Endothelial cell of umbilical vein (primary cell): ENCODE measurements at regions of chr9 and their contacts with region 1.

Region 1: DNA sequence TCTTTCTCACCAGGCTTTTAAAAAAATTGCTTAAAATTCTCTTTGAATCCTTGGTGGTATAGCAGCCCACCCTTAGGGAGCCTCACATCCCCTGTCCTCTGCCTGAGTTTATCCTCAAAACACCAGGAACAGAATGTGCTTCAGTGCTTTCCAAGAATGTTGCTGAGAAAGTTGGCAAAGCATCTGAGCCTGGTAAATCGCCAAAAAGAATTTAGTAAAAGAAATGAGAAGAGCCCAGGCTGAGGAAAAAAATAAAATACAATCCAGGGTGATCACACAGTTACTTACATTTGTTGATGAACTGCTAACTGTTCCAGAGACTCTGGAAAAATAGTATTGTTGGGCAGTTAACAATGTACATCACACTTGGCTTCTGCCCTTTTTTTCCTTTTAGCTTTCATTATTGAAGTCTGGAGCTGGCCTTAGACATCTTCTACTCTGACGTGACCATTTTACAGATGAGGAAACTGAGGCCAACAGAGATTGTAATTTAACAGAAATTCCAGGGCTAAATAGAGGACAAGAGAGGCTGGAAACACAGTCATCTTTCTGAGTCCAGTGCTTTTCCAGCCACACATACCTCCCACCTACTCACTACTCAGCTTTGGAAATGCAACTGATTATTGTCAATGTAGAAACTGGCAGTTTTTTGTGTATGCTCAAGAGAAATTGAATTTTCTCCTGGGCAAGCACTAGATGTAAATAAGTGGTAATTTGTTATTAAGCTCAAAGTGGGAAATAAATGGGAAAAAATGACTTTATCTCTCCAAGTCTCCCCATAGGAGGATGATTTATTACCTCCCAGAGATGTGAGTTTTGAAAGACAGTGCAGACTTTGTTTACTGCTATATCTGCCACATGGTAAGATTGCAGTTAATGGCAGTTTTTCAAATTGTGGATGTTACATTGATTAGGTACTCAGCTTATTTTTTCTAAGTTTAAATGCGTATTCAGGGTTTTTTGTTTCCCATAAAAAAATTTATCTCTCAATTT is 86.7 kb upstream of the ALDH1A1 start:
- DNase-seq: peak; percentile 43
- H3K4me3 ChIP-seq: no peak overlapping the region
- H3K27ac ChIP-seq: no peak overlapping the region
- H3K4me1 ChIP-seq: no peaks in the 10 kb centered on the region
- H3K27me3 ChIP-seq: no peaks in the 10 kb centered on the region
- CTCF ChIP-seq: no peak
- POLR2A ChIP-seq: no peak

Region 2: DNA sequence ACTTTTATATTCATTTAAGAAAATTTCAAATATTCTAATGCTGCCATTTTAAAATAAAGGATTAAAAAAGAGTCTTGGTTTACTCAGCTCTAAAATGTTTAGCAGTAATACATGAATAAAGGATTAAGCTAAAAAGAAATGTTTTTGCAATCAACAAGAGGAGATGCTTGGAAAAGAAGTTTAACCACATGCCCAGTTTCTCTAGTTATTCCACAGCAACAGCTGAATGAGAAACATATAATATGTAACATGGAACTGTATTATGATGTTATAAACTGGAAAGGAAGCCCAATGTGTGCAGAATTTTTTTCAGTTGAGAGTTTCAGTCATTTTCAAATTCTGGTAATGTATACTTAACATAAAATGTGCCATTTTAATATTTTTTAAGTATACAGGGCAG is 10.2 kb before region 1 on chr9:
- CTCF ChIA-PET with region 1: no interaction called
- POLR2A ChIA-PET with region 1: no interaction called
- dilution Hi-C with region 1: no loop called
- intact Hi-C with region 1: loop called (anchors 2 kb)
- DNase-seq: no peak
- H3K4me3 ChIP-seq: no peak overlapping the region
- H3K27ac ChIP-seq: no peak overlapping the region
- H3K4me1 ChIP-seq: no peaks in the 10 kb centered on the region
- H3K27me3 ChIP-seq: no peaks in the 10 kb centered on the region
- CTCF ChIP-seq: no peak
- POLR2A ChIP-seq: no peak

Region 3: GRCh38 chr9:73050065-73050816 is 10.7 kb after region 1 on chr9:
- CTCF ChIA-PET with region 1: interaction called, 3 read pairs
- POLR2A ChIA-PET with region 1: interaction called, 7 read pairs
- dilution Hi-C with region 1: no loop called
- intact Hi-C with region 1: loop called (anchors 2 kb)
- DNase-seq: no peak
- H3K4me3 ChIP-seq: no peak overlapping the region
- H3K27ac ChIP-seq: no peak overlapping the region
- H3K4me1 ChIP-seq: no peaks in the 10 kb centered on the region
- H3K27me3 ChIP-seq: no peaks in the 10 kb centered on the region
- CTCF ChIP-seq: no peak
- POLR2A ChIP-seq: no peak

Region 4: DNA sequence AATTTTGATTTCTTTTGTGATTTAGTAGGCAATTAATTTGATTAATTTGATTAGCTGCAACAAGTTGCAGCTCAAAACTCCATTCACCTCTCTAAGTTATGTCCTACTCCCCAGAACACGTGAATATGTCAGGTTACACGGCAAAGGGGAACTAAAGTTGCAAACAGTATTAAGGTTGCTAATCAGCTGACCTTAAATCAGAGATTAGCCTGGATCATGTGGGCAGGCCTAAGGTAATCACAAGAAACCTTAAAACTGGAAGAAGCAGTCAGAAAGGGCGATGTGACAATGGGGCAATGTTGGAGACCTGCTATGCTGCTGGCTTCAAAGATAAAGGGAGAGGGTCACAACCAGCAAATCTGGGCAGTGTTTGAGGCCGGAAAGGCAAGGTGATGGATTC is 64.8 kb after region 1 on chr9:
- CTCF ChIA-PET with region 1: no interaction called
- POLR2A ChIA-PET with region 1: no interaction called
- dilution Hi-C with region 1: no loop called
- intact Hi-C with region 1: no loop called
- DNase-seq: no peak
- H3K4me3 ChIP-seq: no peak overlapping the region
- H3K27ac ChIP-seq: no peak overlapping the region
- H3K4me1 ChIP-seq: no peaks in the 10 kb centered on the region
- H3K27me3 ChIP-seq: no peaks in the 10 kb centered on the region
- CTCF ChIP-seq: no peak
- POLR2A ChIP-seq: no peak